Natural killer cell (primary cell): ENCODE measurements at regions of chr6 and their contacts with region 1.

Region 1: DNA sequence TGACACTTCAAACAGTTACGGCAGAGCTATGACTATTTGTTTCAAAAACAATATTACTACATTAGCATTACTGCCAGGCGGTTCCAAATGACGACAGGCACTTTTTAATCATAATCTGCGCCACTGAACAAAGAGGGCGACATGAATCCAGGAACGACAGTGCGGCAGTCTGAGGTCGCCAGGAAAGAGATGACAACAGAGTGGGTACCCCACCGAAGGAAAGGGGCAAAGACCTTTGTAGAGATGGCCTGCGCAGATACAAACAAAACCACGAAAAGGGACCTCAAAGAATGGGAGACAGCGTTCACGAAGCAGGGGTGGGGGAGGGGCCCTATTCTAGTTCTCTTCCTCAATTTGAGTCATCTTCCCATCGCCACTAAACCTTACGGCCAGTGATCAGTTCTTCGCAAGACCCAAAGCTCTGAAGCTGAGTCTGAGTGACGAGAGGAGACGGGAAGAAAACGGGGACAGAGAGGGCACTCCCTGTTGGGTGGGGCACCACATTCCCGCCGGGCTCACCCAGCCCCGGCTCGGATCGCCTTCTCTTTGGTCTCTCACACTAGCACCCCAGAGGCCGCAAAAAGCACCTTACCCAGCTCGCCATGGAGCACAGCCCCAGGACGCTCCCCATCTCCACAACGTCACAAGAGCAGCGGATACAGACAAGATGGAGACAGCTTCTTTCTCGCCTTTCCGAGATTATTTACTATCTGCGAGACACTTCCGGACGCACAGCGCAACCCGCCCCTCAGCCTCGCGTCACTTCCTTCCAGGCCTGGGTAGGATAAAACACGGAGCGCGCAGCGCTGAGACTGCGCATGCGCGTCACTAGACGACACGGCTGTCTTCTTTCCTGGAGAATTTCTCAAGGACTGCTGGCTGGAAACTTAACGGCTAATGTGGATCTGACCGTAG is at the start of gene SERINC1:
- DNase-seq: peak; percentile 90 to 98
- ATAC-seq: peak; percentile 94 to 98 (median 96)
- H3K4me3 ChIP-seq: peak within 1 kb of the TSS; percentile 76
- H3K4me3 Mint-ChIP-seq: peak within 1 kb of the TSS; percentile 100
- H3K27ac ChIP-seq: peak within 1 kb of the TSS; percentile 90
- H3K27ac Mint-ChIP-seq: peak within 1 kb of the TSS; percentile 99 to 100
- H3K4me1 ChIP-seq: peaks cover 20% of the 10 kb centered on the region
- H3K4me1 Mint-ChIP-seq: peaks cover 55 to 56% of the 10 kb centered on the region in 2 donors
- H3K27me3 ChIP-seq: no peaks in the 10 kb centered on the region
- H3K27me3 Mint-ChIP-seq: no peaks in the 10 kb centered on the region
- CTCF ChIP-seq: no peak
- total RNA-seq, gene SERINC1: 124 to 131 (median 128) TPM

Region 2: GRCh38 chr6:122372647-122373046 is 98.7 kb before region 1 on chr6:
- intact Hi-C with region 1: no loop called
- DNase-seq: no peak
- ATAC-seq: no peak
- H3K4me3 ChIP-seq: no peak overlapping the region
- H3K4me3 Mint-ChIP-seq: no peak overlapping the region
- H3K27ac ChIP-seq: no peak overlapping the region
- H3K27ac Mint-ChIP-seq: no peak overlapping the region
- H3K4me1 ChIP-seq: no peaks in the 10 kb centered on the region
- H3K4me1 Mint-ChIP-seq: no peaks in the 10 kb centered on the region
- H3K27me3 ChIP-seq: peaks cover 2% of the 10 kb centered on the region
- H3K27me3 Mint-ChIP-seq: peaks cover 12 to 17% of the 10 kb centered on the region in 2 donors
- CTCF ChIP-seq: no peak

Region 3: DNA sequence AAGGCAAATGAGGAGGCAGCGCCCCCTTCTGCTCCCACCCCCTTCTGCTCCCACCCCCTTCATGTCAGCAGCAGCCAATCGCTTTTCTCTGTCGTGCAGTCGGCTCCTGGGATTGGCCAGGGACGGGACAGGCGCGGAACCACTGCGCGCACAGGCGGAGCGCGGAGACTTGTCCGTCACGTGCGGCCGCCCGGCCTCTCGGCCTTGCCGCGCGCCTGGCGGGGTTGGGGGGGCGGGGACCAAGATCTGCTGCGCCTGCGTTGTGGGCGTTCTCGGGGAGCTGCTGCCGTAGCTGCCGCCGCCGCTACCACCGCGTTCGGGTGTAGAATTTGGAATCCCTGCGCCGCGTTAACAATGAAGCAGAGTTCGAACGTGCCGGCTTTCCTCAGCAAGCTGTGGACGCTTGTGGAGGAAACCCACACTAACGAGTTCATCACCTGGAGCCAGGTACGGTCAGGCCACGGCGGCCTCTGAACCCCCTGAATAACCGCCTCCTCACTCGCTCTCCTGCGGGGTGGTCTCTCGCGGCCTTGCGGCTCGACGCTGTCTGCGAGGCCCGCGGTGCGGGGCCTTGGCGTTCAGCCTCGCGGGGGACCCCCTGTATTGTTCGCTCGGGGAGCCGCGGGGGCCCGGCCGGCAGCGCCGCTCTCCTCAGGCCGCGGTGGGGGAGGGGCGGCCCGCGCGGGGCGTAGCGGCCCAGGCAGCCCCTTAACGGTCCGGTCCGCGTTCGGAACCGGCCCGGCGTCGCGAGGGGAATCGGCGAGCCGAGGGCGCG is 71.8 kb before region 1 on chr6 and contains the start of gene HSF2:
- intact Hi-C with region 1: loop called (anchors 1 kb)
- DNase-seq: peak; percentile 85 to 97
- ATAC-seq: peak; percentile 95 to 99 (median 98)
- H3K4me3 ChIP-seq: peak within 1 kb of the TSS; percentile 92
- H3K4me3 Mint-ChIP-seq: peak within 1 kb of the TSS; percentile 97
- H3K27ac ChIP-seq: peak within 1 kb of the TSS; percentile 76
- H3K27ac Mint-ChIP-seq: peak within 1 kb of the TSS; percentile 80 to 93
- H3K4me1 ChIP-seq: peaks cover 6% of the 10 kb centered on the region
- H3K4me1 Mint-ChIP-seq: peaks cover 31 to 33% of the 10 kb centered on the region in 2 donors
- H3K27me3 ChIP-seq: no peaks in the 10 kb centered on the region
- H3K27me3 Mint-ChIP-seq: peaks cover 3 to 8% of the 10 kb centered on the region in 2 donors
- CTCF ChIP-seq: no peak
- total RNA-seq, gene HSF2: 16.4 to 23.5 (median 21.1) TPM

Region 4: GRCh38 chr6:122709922-122710512 is 238.7 kb after region 1 on chr6:
- intact Hi-C with region 1: no loop called
- DNase-seq: peak in 1 of 2 donors; percentile 3
- ATAC-seq: peak in 2 of 3 donors; percentile 31 to 69
- H3K4me3 ChIP-seq: no peak overlapping the region
- H3K4me3 Mint-ChIP-seq: no peak overlapping the region
- H3K27ac ChIP-seq: no peak overlapping the region
- H3K27ac Mint-ChIP-seq: no peak overlapping the region
- H3K4me1 ChIP-seq: no peaks in the 10 kb centered on the region
- H3K4me1 Mint-ChIP-seq: peaks cover 0 to 9% of the 10 kb centered on the region in 2 donors
- H3K27me3 ChIP-seq: no peaks in the 10 kb centered on the region
- H3K27me3 Mint-ChIP-seq: peaks cover 0 to 5% of the 10 kb centered on the region in 2 donors
- CTCF ChIP-seq: no peak